Naive thymus-derived CD4-positive, alpha-beta T cell (primary cell): ENCODE measurements at regions of chr2 and their contacts with region 1.

Region 1: GRCh38 chr2:200963124-200963917 is at the start of gene ORC2:
- DNase-seq: peak; percentile 92 to 97 (median 95)
- ATAC-seq: peak; percentile 98
- H3K4me3 ChIP-seq: peak within 1 kb of the TSS; percentile 89
- H3K4me3 Mint-ChIP-seq: peak within 1 kb of the TSS; percentile 89 to 100 (median 98)
- H3K27ac ChIP-seq: peak within 1 kb of the TSS; percentile 90
- H3K27ac Mint-ChIP-seq: peak within 1 kb of the TSS; percentile 96 to 100 (median 99)
- H3K4me1 ChIP-seq: peaks cover 21 to 32% of the 10 kb centered on the region in 2 donors
- H3K4me1 Mint-ChIP-seq: peaks cover 40 to 83% (median 70%) of the 10 kb centered on the region in 7 donors
- H3K27me3 ChIP-seq: no peaks in the 10 kb centered on the region
- H3K27me3 Mint-ChIP-seq: no peaks in the 10 kb centered on the region
- total RNA-seq, gene ORC2: 29.8 to 78.0 (median 56.2) TPM

Region 2: GRCh38 chr2:199955339-199956261 is 1007.7 kb before region 1 on chr2 and contains the starts of genes MAIP1 and TYW5:
- CTCF ChIA-PET with region 1: no interaction called
- POLR2A ChIA-PET with region 1: no interaction called
- intact Hi-C with region 1: loop called in 1 of 2 experiments (anchors 1 kb)
- DNase-seq: peak; percentile 69 to 85 (median 79)
- ATAC-seq: peak; percentile 93
- H3K4me3 ChIP-seq: peak within 1 kb of the TSS; percentile 95
- H3K4me3 Mint-ChIP-seq: peak within 1 kb of the TSS; percentile 96 to 99 (median 98)
- H3K27ac ChIP-seq: peak within 1 kb of the TSS; percentile 84
- H3K27ac Mint-ChIP-seq: peak within 1 kb of the TSS; percentile 93 to 98 (median 95)
- H3K4me1 ChIP-seq: peaks cover 27 to 34% of the 10 kb centered on the region in 2 donors
- H3K4me1 Mint-ChIP-seq: peaks cover 31 to 72% (median 59%) of the 10 kb centered on the region in 7 donors
- H3K27me3 ChIP-seq: no peaks in the 10 kb centered on the region
- H3K27me3 Mint-ChIP-seq: no peaks in the 10 kb centered on the region
- total RNA-seq, gene MAIP1: 14.5 to 27.8 (median 19.8) TPM
- total RNA-seq, gene TYW5: 6.3 to 13.3 (median 11.2) TPM

Region 3: GRCh38 chr2:200811336-200812121 is 151.8 kb before region 1 on chr2 and contains the start of gene BZW1:
- CTCF ChIA-PET with region 1: interaction called, 5 read pairs
- POLR2A ChIA-PET with region 1: no interaction called
- intact Hi-C with region 1: loop called (anchors 1 kb)
- DNase-seq: peak; percentile 92 to 99 (median 98)
- ATAC-seq: peak; percentile 91
- H3K4me3 ChIP-seq: peak within 1 kb of the TSS; percentile 89
- H3K4me3 Mint-ChIP-seq: peak within 1 kb of the TSS; percentile 89 to 99 (median 98)
- H3K27ac ChIP-seq: peak within 1 kb of the TSS; percentile 99
- H3K27ac Mint-ChIP-seq: peak within 1 kb of the TSS; percentile 91 to 99 (median 98)
- H3K4me1 ChIP-seq: peaks cover 19 to 24% of the 10 kb centered on the region in 2 donors
- H3K4me1 Mint-ChIP-seq: peaks cover 30 to 56% (median 48%) of the 10 kb centered on the region in 7 donors
- H3K27me3 ChIP-seq: no peaks in the 10 kb centered on the region
- H3K27me3 Mint-ChIP-seq: peaks cover 0 to 2% (median 0%) of the 10 kb centered on the region in 5 donors
- total RNA-seq, gene BZW1: 127 to 246 (median 207) TPM

Region 4: GRCh38 chr2:200901459-200902072 is 61.8 kb before region 1 on chr2:
- CTCF ChIA-PET with region 1: no interaction called
- POLR2A ChIA-PET with region 1: no interaction called
- intact Hi-C with region 1: loop called in 1 of 2 experiments (anchors 5 kb)
- DNase-seq: peak; percentile 18 to 83 (median 76)
- ATAC-seq: peak; percentile 100
- H3K4me3 ChIP-seq: no peak overlapping the region
- H3K4me3 Mint-ChIP-seq: no peak overlapping the region
- H3K27ac ChIP-seq: no peak overlapping the region
- H3K27ac Mint-ChIP-seq: peak overlapping the region; percentile 4 to 86 (median 44)
- H3K4me1 ChIP-seq: no peaks in the 10 kb centered on the region
- H3K4me1 Mint-ChIP-seq: peaks cover 0 to 27% (median 6%) of the 10 kb centered on the region in 7 donors
- H3K27me3 ChIP-seq: no peaks in the 10 kb centered on the region
- H3K27me3 Mint-ChIP-seq: no peaks in the 10 kb centered on the region

Region 5: DNA sequence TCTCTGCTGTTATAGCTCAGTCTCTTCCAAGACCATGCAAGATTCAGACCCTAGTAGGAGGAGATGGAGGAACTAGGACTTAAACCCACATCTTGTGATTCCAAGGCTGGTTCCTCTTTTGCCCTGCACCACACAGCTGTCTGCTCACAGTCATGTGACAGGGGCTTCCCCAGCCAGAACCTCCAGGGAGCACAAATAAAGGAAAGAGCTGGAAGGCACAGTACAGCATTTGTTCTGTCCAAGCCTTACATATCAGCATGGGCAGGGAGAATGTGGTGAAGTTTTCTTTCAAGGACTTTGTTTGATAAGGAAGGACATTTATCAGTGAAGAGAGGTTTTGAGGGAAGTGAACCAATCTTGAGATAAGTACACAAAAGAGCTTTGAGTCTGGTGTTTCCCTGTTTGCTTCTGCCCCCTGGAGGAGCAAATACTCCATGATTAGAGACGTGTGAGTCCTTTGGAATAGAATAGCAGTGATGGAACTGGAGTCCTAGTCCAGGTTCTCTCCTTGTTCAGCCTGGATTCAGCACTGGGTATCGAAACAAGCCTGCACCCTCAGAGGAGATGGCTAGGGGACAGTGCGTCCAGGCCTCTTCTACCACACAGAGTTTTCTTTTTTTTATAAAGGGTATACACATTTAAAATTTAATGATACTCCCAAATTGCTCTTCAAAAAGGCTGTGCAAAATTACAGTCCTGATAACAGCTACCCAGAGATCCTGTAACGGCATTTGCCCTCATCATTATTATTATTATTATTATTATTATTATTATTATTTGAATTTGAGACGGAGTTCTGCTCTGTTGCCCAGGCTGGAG is 195.0 kb after region 1 on chr2:
- CTCF ChIA-PET with region 1: interaction called, 8 read pairs
- POLR2A ChIA-PET with region 1: no interaction called
- intact Hi-C with region 1: loop called in 1 of 2 experiments (anchors 1 kb)
- DNase-seq: peak in 7 of 9 donors; percentile 62 to 78 (median 72)
- ATAC-seq: peak; percentile 92
- H3K4me3 ChIP-seq: no peak overlapping the region
- H3K4me3 Mint-ChIP-seq: peak overlapping the region in 3 of 10 donors; percentile 16 to 64 (median 33)
- H3K27ac ChIP-seq: peak overlapping the region; percentile 52
- H3K27ac Mint-ChIP-seq: peak overlapping the region; percentile 26 to 93 (median 89)
- H3K4me1 ChIP-seq: peaks cover 6 to 7% of the 10 kb centered on the region in 2 donors
- H3K4me1 Mint-ChIP-seq: peaks cover 12 to 35% (median 16%) of the 10 kb centered on the region in 7 donors
- H3K27me3 ChIP-seq: no peaks in the 10 kb centered on the region
- H3K27me3 Mint-ChIP-seq: no peaks in the 10 kb centered on the region

Region 6: GRCh38 chr2:201780674-201781581 is 817.6 kb after region 1 on chr2 and contains the start of gene ALS2:
- CTCF ChIA-PET with region 1: no interaction called
- POLR2A ChIA-PET with region 1: no interaction called
- intact Hi-C with region 1: loop called in 1 of 2 experiments (anchors 10 kb)
- DNase-seq: peak; percentile 91 to 97 (median 95)
- ATAC-seq: peak; percentile 96
- H3K4me3 ChIP-seq: peak within 1 kb of the TSS; percentile 96
- H3K4me3 Mint-ChIP-seq: peak within 1 kb of the TSS; percentile 87 to 99 (median 98)
- H3K27ac ChIP-seq: peak within 1 kb of the TSS; percentile 84
- H3K27ac Mint-ChIP-seq: peak within 1 kb of the TSS; percentile 84 to 99 (median 97)
- H3K4me1 ChIP-seq: peaks cover 7 to 10% of the 10 kb centered on the region in 2 donors
- H3K4me1 Mint-ChIP-seq: peaks cover 5 to 36% (median 21%) of the 10 kb centered on the region in 7 donors
- H3K27me3 ChIP-seq: no peaks in the 10 kb centered on the region
- H3K27me3 Mint-ChIP-seq: peaks cover 0 to 22% (median 0%) of the 10 kb centered on the region in 5 donors
- total RNA-seq, gene ALS2: 8.9 to 13.5 (median 10.7) TPM